ENCODE measurements at regions of chr16 and their contacts with region 1.

Region 1: DNA sequence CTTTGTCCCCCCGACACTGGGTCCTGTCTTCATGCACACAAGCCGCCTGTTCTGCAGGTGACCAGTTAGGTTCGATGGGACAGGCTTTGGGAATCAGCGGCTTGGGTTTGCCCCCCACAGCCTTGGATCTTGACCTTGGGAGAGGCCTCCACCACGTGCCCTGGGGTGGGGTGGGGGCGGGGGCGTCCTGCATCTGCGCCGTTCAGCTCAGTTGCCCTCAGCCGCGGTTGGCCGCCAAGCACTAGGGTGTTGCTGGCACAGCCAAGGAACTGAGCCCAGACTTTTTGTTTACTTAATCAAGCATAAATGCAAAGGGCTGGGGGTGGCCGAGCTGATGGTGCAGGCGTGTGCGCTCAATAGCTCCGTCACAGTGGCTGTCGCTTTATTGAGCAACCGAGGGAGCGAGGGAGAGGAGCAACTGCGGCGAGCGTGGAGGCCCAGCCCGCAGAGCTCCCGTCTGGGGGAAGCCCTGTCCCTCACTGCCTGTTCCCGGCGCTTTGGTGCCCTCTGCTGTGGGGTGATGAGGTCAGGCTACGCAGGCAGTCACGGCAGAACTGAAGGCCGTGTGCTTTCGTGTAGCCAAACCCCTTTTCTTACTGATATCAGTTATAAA is 33.9 kb downstream of the JPH3 start:
- DNase-seq: no peak
- H3K4me3 ChIP-seq: peak overlapping the region in 3 of 4 donors; percentile 14 to 44 (median 23)
- H3K27ac ChIP-seq: no peak overlapping the region
- H3K4me1 ChIP-seq: peaks cover 11 to 17% (median 15%) of the 10 kb centered on the region in 4 donors
- H3K27me3 ChIP-seq: peaks cover 0 to 47% (median 0%) of the 10 kb centered on the region in 4 donors
- CTCF ChIP-seq: peak; percentile 55 to 71 (median 68)
- EP300 ChIP-seq: no peak
- POLR2A ChIP-seq: no peak

Region 2: DNA sequence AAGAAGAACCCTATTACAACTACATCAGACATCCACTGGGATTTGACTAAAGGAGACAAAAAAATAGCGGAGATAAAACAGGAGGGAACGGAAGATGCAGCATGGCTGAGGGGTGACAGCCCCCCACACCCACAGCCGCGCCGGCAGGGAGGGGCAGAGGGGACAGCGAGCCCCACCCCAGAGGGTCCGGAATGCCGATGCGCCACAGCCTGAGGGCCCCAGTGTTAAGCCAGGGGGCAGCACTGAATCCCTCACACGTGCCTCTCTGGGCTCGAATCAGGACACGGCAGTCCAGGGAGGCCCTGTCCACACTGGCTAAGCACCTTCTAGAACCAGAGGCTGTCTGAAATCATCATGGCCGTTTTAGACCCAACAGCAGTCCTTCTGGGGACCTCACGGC is 225.2 kb before region 1 on chr16:
- intact Hi-C with region 1: loop called (anchors 5 kb)
- DNase-seq: no peak
- H3K4me3 ChIP-seq: no peak overlapping the region
- H3K27ac ChIP-seq: no peak overlapping the region
- H3K4me1 ChIP-seq: no peaks in the 10 kb centered on the region
- H3K27me3 ChIP-seq: no peaks in the 10 kb centered on the region
- CTCF ChIP-seq: no peak
- EP300 ChIP-seq: no peak
- POLR2A ChIP-seq: no peak

Region 3: GRCh38 chr16:87550496-87550961 is 85.6 kb before region 1 on chr16:
- intact Hi-C with region 1: loop called (anchors 5 kb)
- DNase-seq: no peak
- H3K4me3 ChIP-seq: no peak overlapping the region
- H3K27ac ChIP-seq: no peak overlapping the region
- H3K4me1 ChIP-seq: peaks cover 0 to 8% (median 4%) of the 10 kb centered on the region in 4 donors
- H3K27me3 ChIP-seq: peaks cover 0 to 42% (median 0%) of the 10 kb centered on the region in 4 donors
- CTCF ChIP-seq: peak; percentile 75 to 98 (median 86)
- EP300 ChIP-seq: no peak
- POLR2A ChIP-seq: no peak

Region 4: GRCh38 chr16:87593710-87594258 is 42.4 kb before region 1 on chr16:
- intact Hi-C with region 1: loop called (anchors 2 kb)
- DNase-seq: no peak
- H3K4me3 ChIP-seq: no peak overlapping the region
- H3K27ac ChIP-seq: no peak overlapping the region
- H3K4me1 ChIP-seq: peaks cover 3 to 5% (median 4%) of the 10 kb centered on the region in 4 donors
- H3K27me3 ChIP-seq: peaks cover 0 to 70% (median 0%) of the 10 kb centered on the region in 4 donors
- CTCF ChIP-seq: no peak
- EP300 ChIP-seq: no peak
- POLR2A ChIP-seq: no peak

Region 5: GRCh38 chr16:87681981-87682570 is 45.9 kb after region 1 on chr16:
- intact Hi-C with region 1: no loop called
- DNase-seq: no peak
- H3K4me3 ChIP-seq: no peak overlapping the region
- H3K27ac ChIP-seq: no peak overlapping the region
- H3K4me1 ChIP-seq: peaks cover 0 to 3% (median 0%) of the 10 kb centered on the region in 4 donors
- H3K27me3 ChIP-seq: peaks cover 0 to 76% (median 0%) of the 10 kb centered on the region in 4 donors
- CTCF ChIP-seq: no peak
- EP300 ChIP-seq: no peak
- POLR2A ChIP-seq: no peak

Region 6: DNA sequence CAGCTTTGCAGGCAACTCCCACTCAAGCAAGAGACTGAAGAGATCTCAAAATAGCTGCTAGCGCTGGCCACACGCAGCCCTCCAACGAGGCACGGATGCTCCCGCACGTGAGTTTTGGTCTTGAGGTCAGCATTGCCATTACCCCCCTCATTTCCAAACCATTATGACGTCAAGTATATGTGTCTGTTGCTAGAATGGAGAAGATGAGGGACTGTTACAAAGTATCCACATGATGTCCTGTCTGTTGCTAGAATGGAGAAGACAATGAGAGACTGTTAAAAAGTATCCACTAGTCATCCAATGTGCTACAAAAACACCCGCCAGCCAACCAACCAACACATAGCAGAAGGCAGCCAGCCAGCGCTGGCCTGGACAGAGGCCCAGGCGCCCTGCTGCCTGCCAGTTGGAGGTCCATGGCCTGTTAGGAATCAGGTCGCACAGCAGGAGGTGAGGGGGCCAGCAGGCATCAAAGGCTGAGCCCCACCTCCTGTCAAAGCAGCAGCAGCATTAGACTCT is 104.8 kb after region 1 on chr16:
- intact Hi-C with region 1: no loop called
- DNase-seq: no peak
- H3K4me3 ChIP-seq: no peak overlapping the region
- H3K27ac ChIP-seq: no peak overlapping the region
- H3K4me1 ChIP-seq: peaks cover 8 to 17% (median 14%) of the 10 kb centered on the region in 4 donors
- H3K27me3 ChIP-seq: no peaks in the 10 kb centered on the region
- CTCF ChIP-seq: no peak
- EP300 ChIP-seq: no peak
- POLR2A ChIP-seq: no peak

Region 7: GRCh38 chr16:87757915-87758314 is 121.7 kb after region 1 on chr16:
- intact Hi-C with region 1: no loop called
- DNase-seq: no peak
- H3K4me3 ChIP-seq: no peak overlapping the region
- H3K27ac ChIP-seq: no peak overlapping the region
- H3K4me1 ChIP-seq: no peaks in the 10 kb centered on the region
- H3K27me3 ChIP-seq: no peaks in the 10 kb centered on the region
- CTCF ChIP-seq: no peak
- EP300 ChIP-seq: no peak
- POLR2A ChIP-seq: no peak

Region 8: DNA sequence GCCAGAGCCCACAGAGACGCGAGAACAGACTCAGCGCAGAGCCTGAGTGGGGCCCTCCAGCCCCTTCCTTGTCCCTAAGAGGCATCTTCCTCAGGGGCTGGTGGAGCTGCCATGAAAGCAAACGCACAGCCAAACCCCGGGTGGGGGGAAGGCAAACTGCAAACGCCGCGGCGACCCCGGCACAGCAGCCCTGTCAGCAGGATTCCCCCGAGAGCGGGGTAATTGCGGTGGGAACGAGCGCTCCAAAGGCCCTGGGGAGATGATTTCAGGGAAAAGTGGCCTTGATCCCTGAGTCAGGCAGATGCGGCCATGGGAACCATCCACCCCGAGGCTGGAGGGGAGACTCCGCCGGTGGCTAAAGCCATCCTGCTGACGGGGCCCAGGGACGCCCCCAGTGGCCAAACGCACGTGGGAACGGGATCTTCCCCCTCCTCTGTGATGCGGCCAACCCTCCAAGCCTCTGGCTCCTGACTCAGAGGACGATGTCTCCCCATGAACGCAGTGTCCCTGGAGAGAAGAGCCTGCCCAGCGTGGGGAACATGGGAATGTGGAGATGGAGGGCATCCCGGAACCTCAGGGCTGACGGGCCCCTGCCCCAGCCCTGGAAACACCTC is 208.0 kb after region 1 on chr16:
- intact Hi-C with region 1: no loop called
- DNase-seq: no peak
- H3K4me3 ChIP-seq: no peak overlapping the region
- H3K27ac ChIP-seq: no peak overlapping the region
- H3K4me1 ChIP-seq: peaks cover 0 to 8% (median 3%) of the 10 kb centered on the region in 4 donors
- H3K27me3 ChIP-seq: no peaks in the 10 kb centered on the region
- CTCF ChIP-seq: no peak
- EP300 ChIP-seq: no peak
- POLR2A ChIP-seq: no peak